ENCODE measurements at regions of chr12 and their contacts with region 1.

Region 1: DNA sequence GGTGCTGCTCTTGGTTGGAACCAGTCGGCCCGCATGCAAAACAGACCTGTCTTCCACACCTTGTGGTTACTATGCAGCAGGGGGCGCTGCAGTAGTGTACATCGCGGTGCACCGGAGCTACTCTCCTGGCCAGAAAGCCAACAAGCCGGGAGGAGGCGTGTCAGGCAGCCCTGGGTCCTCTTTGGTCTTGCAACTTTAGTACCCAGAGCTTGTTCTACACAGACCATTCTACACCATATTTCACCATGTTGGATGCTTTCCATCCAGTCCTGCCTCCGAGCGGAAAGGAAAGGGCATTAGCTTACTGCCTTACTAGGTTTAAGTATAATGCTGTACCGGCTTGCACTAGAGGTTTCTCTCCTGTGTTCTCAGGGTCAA is 927 bp upstream of the TMTC2 start:
- DNase-seq: peak; percentile 78 to 92 (median 83)
- H3K4me3 ChIP-seq: peak overlapping the region; percentile 91
- H3K4me3 Mint-ChIP-seq: peak overlapping the region; percentile 91 to 99 (median 97)
- H3K27ac ChIP-seq: peak overlapping the region; percentile 75
- H3K27ac Mint-ChIP-seq: peak overlapping the region; percentile 94 to 100 (median 96)
- H3K4me1 ChIP-seq: peaks cover 8% of the 10 kb centered on the region
- H3K4me1 Mint-ChIP-seq: peaks cover 11 to 27% (median 23%) of the 10 kb centered on the region in 3 donors
- H3K27me3 ChIP-seq: no peaks in the 10 kb centered on the region
- H3K27me3 Mint-ChIP-seq: peaks cover 10 to 17% of the 10 kb centered on the region in 2 donors

Region 2: DNA sequence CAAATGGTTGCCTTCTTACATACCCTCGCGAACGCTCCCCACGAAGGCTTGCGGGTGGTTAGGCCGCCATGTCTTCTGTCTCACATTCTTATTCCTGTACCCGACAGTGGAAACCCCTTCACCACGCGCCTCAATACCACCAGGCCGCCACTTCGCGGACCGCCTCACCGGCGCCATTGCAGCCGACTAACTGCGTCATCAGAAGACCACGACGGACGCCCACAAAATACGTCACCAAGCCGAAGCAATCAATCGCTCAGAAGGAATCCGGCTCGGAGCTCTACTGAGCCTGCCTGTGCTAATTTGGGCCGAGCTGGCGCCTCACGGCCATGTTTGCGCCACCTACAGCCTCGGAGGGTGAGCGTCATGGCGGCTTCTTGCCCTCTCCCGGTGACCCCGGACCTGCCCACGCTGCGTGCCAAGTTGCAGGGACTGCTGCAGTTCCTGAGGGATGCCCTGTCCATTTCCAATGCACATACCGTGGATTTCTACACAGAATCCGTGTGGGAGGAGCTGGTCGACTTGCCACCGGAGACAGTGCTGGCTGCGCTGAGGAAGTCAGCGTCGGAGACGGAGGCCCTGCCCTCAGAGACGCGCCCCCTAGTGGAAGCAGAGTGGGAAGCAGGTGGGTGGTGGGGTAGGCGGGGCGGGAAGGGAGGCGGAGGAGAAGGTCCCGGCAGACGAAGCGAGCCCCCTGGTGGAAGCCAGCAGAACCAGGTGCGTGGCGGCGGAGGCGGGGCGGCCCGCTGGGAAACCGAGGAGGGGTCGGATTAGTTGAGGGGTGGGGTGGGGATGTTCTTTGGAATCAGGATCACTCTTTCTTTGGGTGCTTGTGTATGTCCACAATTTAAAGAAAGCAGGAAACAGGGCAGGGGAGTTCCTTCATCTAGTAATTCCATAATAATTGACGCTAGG is 327.3 kb before region 1 on chr12 and contains the starts of genes CCDC59 and METTL25:
- CTCF ChIA-PET with region 1: interaction called, 13 read pairs
- POLR2A ChIA-PET with region 1: interaction called, 8 read pairs
- DNase-seq: peak; percentile 96 to 98 (median 98)
- H3K4me3 ChIP-seq: peak within 1 kb of the TSS; percentile 94
- H3K4me3 Mint-ChIP-seq: peak within 1 kb of the TSS; percentile 94 to 98 (median 96)
- H3K27ac ChIP-seq: peak within 1 kb of the TSS; percentile 98
- H3K27ac Mint-ChIP-seq: peak within 1 kb of the TSS; percentile 97 to 100 (median 99)
- H3K4me1 ChIP-seq: peaks cover 41% of the 10 kb centered on the region
- H3K4me1 Mint-ChIP-seq: peaks cover 61 to 76% (median 71%) of the 10 kb centered on the region in 3 donors
- H3K27me3 ChIP-seq: no peaks in the 10 kb centered on the region
- H3K27me3 Mint-ChIP-seq: peaks cover 0 to 2% of the 10 kb centered on the region in 2 donors
- total RNA-seq, gene CCDC59: 97.5 to 104 TPM
- total RNA-seq, gene METTL25: 7.4 to 8.4 TPM

Region 3: GRCh38 chr12:82675246-82675645 is 10.5 kb before region 1 on chr12:
- CTCF ChIA-PET with region 1: interaction called, 13 read pairs
- POLR2A ChIA-PET with region 1: no interaction called
- DNase-seq: no peak
- H3K4me3 ChIP-seq: no peak overlapping the region
- H3K4me3 Mint-ChIP-seq: no peak overlapping the region
- H3K27ac ChIP-seq: no peak overlapping the region
- H3K27ac Mint-ChIP-seq: no peak overlapping the region
- H3K4me1 ChIP-seq: no peaks in the 10 kb centered on the region
- H3K4me1 Mint-ChIP-seq: no peaks in the 10 kb centered on the region
- H3K27me3 ChIP-seq: no peaks in the 10 kb centered on the region
- H3K27me3 Mint-ChIP-seq: peaks cover 6 to 21% of the 10 kb centered on the region in 2 donors

Region 4: GRCh38 chr12:82880442-82880901 is 194.7 kb after region 1 on chr12:
- CTCF ChIA-PET with region 1: no interaction called
- POLR2A ChIA-PET with region 1: no interaction called
- DNase-seq: no peak
- H3K4me3 ChIP-seq: no peak overlapping the region
- H3K4me3 Mint-ChIP-seq: no peak overlapping the region
- H3K27ac ChIP-seq: no peak overlapping the region
- H3K27ac Mint-ChIP-seq: no peak overlapping the region
- H3K4me1 ChIP-seq: no peaks in the 10 kb centered on the region
- H3K4me1 Mint-ChIP-seq: no peaks in the 10 kb centered on the region
- H3K27me3 ChIP-seq: no peaks in the 10 kb centered on the region
- H3K27me3 Mint-ChIP-seq: no peaks in the 10 kb centered on the region

Measured in CD8-positive, alpha-beta memory T cell (primary cell).